Activated CD4-positive, alpha-beta T cell treated with anti-CD3 and anti-CD28 coated beads for 36 hours (primary cell): ENCODE measurements at regions of chr9 and their contacts with region 1.

Region 1: DNA sequence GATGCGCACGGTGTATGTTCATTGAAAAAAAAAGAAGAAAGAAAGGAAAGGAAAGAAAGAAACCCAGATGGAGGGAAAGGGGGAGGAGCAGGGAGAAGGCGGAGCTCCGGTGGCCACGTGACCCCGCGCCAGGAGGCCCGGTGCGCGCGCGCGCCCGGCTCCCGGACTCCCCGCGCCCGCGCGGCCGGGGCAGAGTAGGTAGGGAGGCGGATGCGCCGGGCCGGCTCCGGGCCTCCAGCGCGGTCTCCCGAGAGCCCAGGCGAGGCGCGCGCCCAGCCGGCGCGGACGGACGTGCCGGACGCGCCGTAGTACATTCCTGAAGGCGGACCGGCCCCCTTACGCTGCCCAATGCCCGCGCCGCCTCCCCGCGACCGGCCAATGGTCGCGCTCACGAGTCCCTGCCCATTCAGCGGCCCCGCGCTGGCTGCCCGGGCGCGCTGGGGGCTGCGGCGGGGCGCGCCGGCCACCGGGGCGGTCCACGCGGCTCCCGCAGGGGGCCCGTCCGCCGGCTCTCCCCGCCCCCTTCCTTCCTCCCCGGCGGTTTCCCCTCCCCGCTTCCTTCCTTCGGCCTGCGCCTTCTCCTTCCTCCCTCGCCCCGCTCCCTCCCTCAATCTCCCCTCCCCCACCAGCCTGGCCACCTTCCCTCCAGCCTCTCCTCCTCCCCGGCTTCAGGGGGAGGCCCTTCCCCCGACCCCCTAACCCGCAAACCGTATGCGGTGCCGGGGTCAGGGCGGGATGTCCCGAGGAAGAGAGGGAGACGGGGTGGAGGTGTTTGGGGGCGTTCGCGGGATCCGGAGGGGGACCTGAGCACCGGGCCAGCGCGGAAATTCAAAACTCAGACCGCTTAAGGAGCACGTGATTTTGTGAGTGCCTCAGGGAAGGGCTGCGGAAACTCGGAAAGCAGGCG is 5.8 kb downstream of the PTCH1 start:
- DNase-seq: peak; percentile 92
- ATAC-seq: peak; percentile 74
- H3K4me3 Mint-ChIP-seq: peak overlapping the region; percentile 82
- H3K27ac Mint-ChIP-seq: peak overlapping the region; percentile 84
- H3K4me1 Mint-ChIP-seq: peaks cover 38% of the 10 kb centered on the region
- H3K27me3 Mint-ChIP-seq: peaks cover 26% of the 10 kb centered on the region

Region 2: GRCh38 chr9:94166237-94166963 is 1344.6 kb before region 1 on chr9:
- CTCF ChIA-PET with region 1: no interaction called
- POLR2A ChIA-PET with region 1: no interaction called
- intact Hi-C with region 1: loop called in 1 of 2 experiments (anchors 5 kb)
- DNase-seq: peak; percentile 97
- ATAC-seq: peak; percentile 65
- H3K4me3 Mint-ChIP-seq: peak overlapping the region; percentile 89
- H3K27ac Mint-ChIP-seq: peak overlapping the region; percentile 91
- H3K4me1 Mint-ChIP-seq: peaks cover 34% of the 10 kb centered on the region
- H3K27me3 Mint-ChIP-seq: no peaks in the 10 kb centered on the region

Region 3: GRCh38 chr9:95425910-95426551 is 84.9 kb before region 1 on chr9:
- CTCF ChIA-PET with region 1: no interaction called
- POLR2A ChIA-PET with region 1: interaction called, 3 read pairs
- intact Hi-C with region 1: loop called (anchors 2 to 5 kb)
- DNase-seq: peak; percentile 25
- ATAC-seq: no peak
- H3K4me3 Mint-ChIP-seq: peak overlapping the region; percentile 72
- H3K27ac Mint-ChIP-seq: peak overlapping the region; percentile 70
- H3K4me1 Mint-ChIP-seq: peaks cover 10% of the 10 kb centered on the region
- H3K27me3 Mint-ChIP-seq: no peaks in the 10 kb centered on the region

Region 4: DNA sequence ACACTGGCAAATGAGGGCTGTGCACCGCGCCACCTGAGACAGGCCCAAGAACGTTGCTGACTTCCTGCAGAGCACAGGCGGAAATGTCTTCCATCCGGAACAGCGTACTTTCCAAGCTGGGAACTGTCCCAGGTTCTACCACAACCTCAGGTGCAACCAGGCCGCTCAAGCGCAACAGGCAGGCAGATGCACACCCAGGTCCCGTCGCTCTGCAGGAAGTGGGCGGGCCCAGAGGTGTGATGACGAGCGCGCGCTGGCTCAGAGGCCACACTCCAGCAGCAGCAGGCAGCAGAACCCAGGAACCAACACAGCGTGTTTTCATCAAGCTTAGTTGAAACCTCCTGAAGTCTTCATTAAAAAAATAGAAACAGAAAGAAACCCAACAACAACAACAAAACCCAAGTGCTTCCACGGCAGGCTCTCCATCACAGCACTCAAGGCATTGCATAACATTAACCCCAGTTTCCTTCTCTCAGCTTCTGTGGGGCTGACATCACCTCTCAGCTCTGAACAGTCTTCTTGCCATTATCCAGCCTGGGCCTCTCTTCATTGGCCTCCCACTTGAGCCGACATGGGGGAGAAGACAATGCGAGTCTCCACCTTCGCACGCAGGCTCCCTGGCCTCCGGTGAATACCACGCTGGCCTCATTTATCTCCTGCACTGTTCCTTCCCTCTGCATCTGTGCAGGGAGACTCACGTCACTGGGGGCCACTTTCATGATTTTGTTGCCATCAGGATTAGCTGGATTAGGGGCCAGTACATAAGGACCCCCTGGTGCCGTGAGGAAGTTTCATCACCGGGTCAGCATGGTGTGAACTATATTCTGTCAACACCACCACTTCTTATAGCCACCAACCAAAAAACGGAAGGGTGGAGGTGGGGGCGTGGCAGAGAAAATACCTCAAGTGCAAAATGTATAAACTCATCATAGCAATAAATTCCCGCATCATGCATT is 16.3 kb before region 1 on chr9:
- CTCF ChIA-PET with region 1: interaction called, 4 read pairs
- POLR2A ChIA-PET with region 1: no interaction called
- intact Hi-C with region 1: loop called (anchors 1 to 2 kb)
- DNase-seq: peak; percentile 92
- ATAC-seq: peak; percentile 98
- H3K4me3 Mint-ChIP-seq: peak overlapping the region; percentile 68
- H3K27ac Mint-ChIP-seq: peak overlapping the region; percentile 93
- H3K4me1 Mint-ChIP-seq: peaks cover 68% of the 10 kb centered on the region
- H3K27me3 Mint-ChIP-seq: no peaks in the 10 kb centered on the region

Region 5: GRCh38 chr9:95570150-95570549 is 59.2 kb after region 1 on chr9:
- CTCF ChIA-PET with region 1: no interaction called
- POLR2A ChIA-PET with region 1: no interaction called
- intact Hi-C with region 1: no loop called
- DNase-seq: no peak
- ATAC-seq: no peak
- H3K4me3 Mint-ChIP-seq: peak overlapping the region; percentile 20
- H3K27ac Mint-ChIP-seq: no peak overlapping the region
- H3K4me1 Mint-ChIP-seq: peaks cover 12% of the 10 kb centered on the region
- H3K27me3 Mint-ChIP-seq: peaks cover 30% of the 10 kb centered on the region

Region 6: GRCh38 chr9:96020792-96021550 is 510.0 kb after region 1 on chr9:
- CTCF ChIA-PET with region 1: no interaction called
- POLR2A ChIA-PET with region 1: no interaction called
- intact Hi-C with region 1: loop called in 1 of 2 experiments (anchors 2 kb)
- DNase-seq: peak; percentile 71
- ATAC-seq: peak; percentile 38
- H3K4me3 Mint-ChIP-seq: peak overlapping the region; percentile 68
- H3K27ac Mint-ChIP-seq: peak overlapping the region; percentile 63
- H3K4me1 Mint-ChIP-seq: peaks cover 57% of the 10 kb centered on the region
- H3K27me3 Mint-ChIP-seq: peaks cover 43% of the 10 kb centered on the region

Region 7: DNA sequence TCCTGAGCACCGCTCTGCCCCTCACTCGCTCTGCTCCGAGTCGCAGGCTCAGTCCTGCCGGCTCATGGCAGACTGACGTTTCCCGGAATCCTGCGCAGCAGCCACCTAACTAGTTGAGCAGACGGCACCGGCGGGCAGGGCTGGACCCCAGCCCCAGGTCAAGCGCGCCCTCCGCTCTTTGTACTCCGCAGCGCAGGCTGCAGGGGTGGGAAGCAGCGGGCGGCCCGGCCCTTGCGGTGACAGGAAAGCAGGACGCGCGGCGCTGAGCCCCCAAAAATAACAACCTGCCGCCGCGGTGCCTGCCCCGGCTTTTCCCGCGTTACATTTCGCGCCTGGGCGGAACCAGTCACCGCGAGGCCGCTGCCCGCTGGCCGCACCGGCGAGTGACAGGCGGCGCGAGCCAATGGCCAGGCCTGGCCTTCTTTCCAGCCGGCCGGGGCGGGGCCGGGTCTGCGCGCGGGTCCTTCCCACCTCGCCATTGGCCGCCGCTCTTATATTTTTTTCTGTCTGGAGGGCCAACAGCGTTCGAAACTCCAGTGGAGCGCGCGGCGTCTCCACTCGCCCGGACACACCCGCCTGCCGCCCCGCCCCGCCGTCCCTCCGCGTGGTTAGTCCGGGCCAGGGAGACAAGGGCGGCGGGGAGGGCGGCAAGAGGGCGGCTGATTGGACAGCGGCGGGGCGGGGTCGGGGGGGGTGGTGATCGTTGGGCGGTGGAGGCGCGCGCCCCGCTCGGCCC is 907.3 kb after region 1 on chr9 and contains the start of gene ZNF367:
- CTCF ChIA-PET with region 1: interaction called, 5 read pairs
- POLR2A ChIA-PET with region 1: no interaction called
- intact Hi-C with region 1: loop called in 1 of 2 experiments (anchors 1 kb)
- DNase-seq: peak; percentile 97
- ATAC-seq: peak; percentile 81
- H3K4me3 Mint-ChIP-seq: peak within 1 kb of the TSS; percentile 93
- H3K27ac Mint-ChIP-seq: peak within 1 kb of the TSS; percentile 90
- H3K4me1 Mint-ChIP-seq: peaks cover 38% of the 10 kb centered on the region
- H3K27me3 Mint-ChIP-seq: no peaks in the 10 kb centered on the region
- total RNA-seq, gene ZNF367: 22.0 to 24.2 TPM